Activated CD4-positive, alpha-beta memory T cell treated with anti-CD3 and anti-CD28 coated beads for 36 hours (primary cell): ENCODE measurements at regions of chr11 and their contacts with region 1.

Region 1: GRCh38 chr11:47766305-47767227 is 575 bp downstream of the FNBP4 start:
- DNase-seq: peak; percentile 88
- H3K4me3 Mint-ChIP-seq: peak overlapping the region; percentile 91
- H3K27ac Mint-ChIP-seq: peak overlapping the region; percentile 100
- H3K4me1 Mint-ChIP-seq: peaks cover 18% of the 10 kb centered on the region
- H3K27me3 Mint-ChIP-seq: no peaks in the 10 kb centered on the region

Region 2: GRCh38 chr11:47426061-47426956 is 340.3 kb before region 1 on chr11 and contains the start of gene PSMC3:
- CTCF ChIA-PET with region 1: no interaction called
- POLR2A ChIA-PET with region 1: no interaction called
- intact Hi-C with region 1: loop called (anchors 10 kb)
- DNase-seq: peak; percentile 99
- H3K4me3 Mint-ChIP-seq: peak within 1 kb of the TSS; percentile 100
- H3K27ac Mint-ChIP-seq: peak within 1 kb of the TSS; percentile 95
- H3K4me1 Mint-ChIP-seq: peaks cover 26% of the 10 kb centered on the region
- H3K27me3 Mint-ChIP-seq: no peaks in the 10 kb centered on the region
- total RNA-seq, gene PSMC3: 143 to 148 TPM

Region 3: DNA sequence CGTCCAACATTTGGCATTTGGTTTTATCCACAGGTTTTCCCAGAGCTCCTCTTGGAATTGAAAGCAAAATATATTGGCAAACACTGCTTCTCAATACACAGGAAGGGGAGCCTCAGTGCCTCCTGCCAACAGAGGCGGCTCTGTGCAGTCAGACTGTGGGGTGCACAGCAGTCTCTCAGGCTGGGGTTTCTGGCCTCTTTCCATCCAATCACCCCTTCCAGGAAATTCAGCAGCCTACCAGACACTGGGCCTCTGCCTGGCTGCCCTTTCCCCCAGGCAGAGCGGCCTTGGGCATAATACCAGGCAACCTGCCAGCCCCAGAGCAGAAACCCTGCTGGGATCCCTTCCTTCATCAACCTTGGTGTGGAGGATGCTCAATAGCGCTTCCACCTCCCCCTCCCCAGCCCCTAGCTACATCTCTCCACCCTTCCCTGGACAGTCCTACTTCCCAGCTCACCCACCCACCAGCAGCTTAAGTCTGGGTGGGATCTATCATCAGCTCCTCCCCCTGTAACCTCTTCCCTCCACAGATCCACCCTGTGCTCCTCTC is 299.8 kb before region 1 on chr11:
- CTCF ChIA-PET with region 1: no interaction called
- POLR2A ChIA-PET with region 1: no interaction called
- intact Hi-C with region 1: no loop called
- DNase-seq: no peak
- H3K4me3 Mint-ChIP-seq: no peak overlapping the region
- H3K27ac Mint-ChIP-seq: peak overlapping the region; percentile 33
- H3K4me1 Mint-ChIP-seq: peaks cover 5% of the 10 kb centered on the region
- H3K27me3 Mint-ChIP-seq: no peaks in the 10 kb centered on the region

Region 4: DNA sequence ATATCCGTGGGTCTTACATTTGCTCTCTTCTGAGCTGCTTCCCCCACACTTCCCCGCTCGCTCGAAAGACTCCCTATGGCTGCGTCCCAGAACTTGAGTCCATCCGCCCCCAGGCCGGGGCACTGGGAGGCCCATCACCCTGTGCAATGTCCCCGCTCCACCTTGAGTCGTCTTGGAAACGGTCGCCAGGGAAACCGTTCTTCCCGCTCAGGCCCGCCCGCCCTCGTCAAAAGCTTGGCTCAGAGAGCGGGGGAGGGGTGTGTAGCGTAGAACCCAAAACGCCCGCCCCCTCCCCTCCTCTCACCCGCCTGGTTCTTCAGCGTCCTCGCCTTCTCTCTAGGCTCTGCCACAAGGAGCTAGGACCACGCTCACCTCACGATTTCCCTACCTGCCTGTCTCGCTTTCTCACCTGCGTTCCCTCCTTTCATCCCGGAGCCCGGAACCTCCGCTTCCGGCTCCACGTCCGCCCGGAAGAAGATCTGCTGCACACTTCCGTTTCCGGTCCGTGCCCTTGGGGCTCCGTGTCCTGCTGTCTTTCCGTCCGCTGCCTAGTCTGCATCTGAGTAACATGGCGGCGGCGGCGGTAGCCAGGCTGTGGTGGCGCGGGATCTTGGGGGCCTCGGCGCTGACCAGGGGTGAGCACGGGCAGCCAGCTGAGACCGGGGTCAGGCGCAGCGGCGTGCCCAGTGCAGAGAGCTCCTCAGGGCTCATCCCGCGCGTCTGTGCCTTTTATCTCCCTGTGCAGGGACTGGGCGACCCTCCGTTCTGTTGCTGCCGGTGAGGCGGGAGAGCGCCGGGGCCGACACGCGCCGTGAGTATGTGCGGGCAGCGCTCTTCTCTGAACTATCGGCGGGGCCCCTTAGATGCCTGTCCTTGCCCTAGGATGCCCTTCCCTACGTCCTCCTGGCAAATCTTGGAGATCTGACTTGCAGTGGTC is 187.8 kb before region 1 on chr11 and contains the starts of genes KBTBD4 and NDUFS3:
- CTCF ChIA-PET with region 1: no interaction called
- POLR2A ChIA-PET with region 1: no interaction called
- intact Hi-C with region 1: loop called (anchors 1 kb)
- DNase-seq: peak; percentile 93
- H3K4me3 Mint-ChIP-seq: peak within 1 kb of the TSS; percentile 94
- H3K27ac Mint-ChIP-seq: peak within 1 kb of the TSS; percentile 93
- H3K4me1 Mint-ChIP-seq: peaks cover 32% of the 10 kb centered on the region
- H3K27me3 Mint-ChIP-seq: peaks cover 1% of the 10 kb centered on the region
- total RNA-seq, gene KBTBD4: 18.7 to 18.8 TPM
- total RNA-seq, gene NDUFS3: 94.0 to 94.4 TPM

Region 5: GRCh38 chr11:47715082-47715669 is 51.4 kb before region 1 on chr11 and contains the start of gene AGBL2:
- CTCF ChIA-PET with region 1: interaction called, 3 read pairs
- POLR2A ChIA-PET with region 1: interaction called, 8 read pairs
- intact Hi-C with region 1: loop called (anchors 1 kb)
- DNase-seq: peak; percentile 91
- H3K4me3 Mint-ChIP-seq: peak within 1 kb of the TSS; percentile 86
- H3K27ac Mint-ChIP-seq: peak within 1 kb of the TSS; percentile 95
- H3K4me1 Mint-ChIP-seq: peaks cover 21% of the 10 kb centered on the region
- H3K27me3 Mint-ChIP-seq: no peaks in the 10 kb centered on the region
- total RNA-seq, gene AGBL2: 4.2 to 5.0 TPM

Region 6: GRCh38 chr11:47847892-47848635 is 81.5 kb after region 1 on chr11 and contains the start of gene NUP160:
- CTCF ChIA-PET with region 1: interaction called, 9 read pairs
- POLR2A ChIA-PET with region 1: interaction called, 4 read pairs
- intact Hi-C with region 1: loop called (anchors 1 kb)
- DNase-seq: peak; percentile 92
- H3K4me3 Mint-ChIP-seq: peak within 1 kb of the TSS; percentile 98
- H3K27ac Mint-ChIP-seq: peak within 1 kb of the TSS; percentile 97
- H3K4me1 Mint-ChIP-seq: peaks cover 45% of the 10 kb centered on the region
- H3K27me3 Mint-ChIP-seq: no peaks in the 10 kb centered on the region
- total RNA-seq, gene NUP160: 68.0 to 69.5 TPM